ENCODE measurements at regions of chr6 and their contacts with region 1.

Region 1: GRCh38 chr6:31332637-31333602 is 24.1 kb downstream of the HLA-B start:
- DNase-seq: peak; percentile 39
- H3K4me3 Mint-ChIP-seq: no peak overlapping the region
- H3K27ac Mint-ChIP-seq: peak overlapping the region; percentile 60
- H3K4me1 Mint-ChIP-seq: peaks cover 16% of the 10 kb centered on the region
- H3K27me3 Mint-ChIP-seq: no peaks in the 10 kb centered on the region

Region 2: DNA sequence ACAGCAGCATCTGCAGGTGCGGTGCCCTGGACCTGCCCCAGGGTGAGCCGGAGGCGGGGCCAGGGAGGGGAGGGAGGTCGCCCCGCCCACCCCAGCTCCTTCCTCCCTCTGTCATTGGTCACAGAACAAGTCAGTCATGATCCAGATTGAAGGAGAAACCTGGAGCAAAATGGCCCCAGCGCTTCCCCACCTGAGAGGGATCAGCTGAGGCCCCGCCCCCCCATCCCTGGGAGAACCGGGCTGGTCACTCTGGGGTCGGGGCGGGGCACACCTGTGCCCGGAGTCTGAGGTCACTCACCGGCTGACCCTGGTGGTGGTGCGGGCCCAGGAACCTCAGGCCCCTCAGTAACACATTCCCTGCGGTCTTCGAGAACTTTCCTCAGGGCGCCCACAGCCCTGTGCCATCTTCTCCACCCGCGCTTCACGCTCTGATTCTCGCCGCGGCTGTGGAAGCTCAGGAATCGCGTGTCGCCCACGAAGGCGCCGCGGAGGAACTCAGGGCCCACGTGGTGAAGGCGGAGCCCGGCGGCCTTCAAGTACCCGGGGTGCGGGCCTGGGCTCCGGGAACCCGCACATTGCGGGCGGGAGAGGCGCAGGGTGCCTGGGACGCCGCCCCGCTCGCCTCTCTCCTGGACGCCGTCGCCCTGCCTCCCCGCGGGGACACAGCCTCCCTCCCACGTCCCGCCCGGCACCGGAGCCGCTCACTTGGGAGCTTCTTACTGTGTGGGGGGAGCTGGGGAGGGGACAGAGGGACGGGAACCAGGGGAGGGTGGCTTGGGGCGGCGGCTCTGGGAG is 24.7 kb before region 1 on chr6:
- CTCF ChIA-PET with region 1: no interaction called
- POLR2A ChIA-PET with region 1: no interaction called
- intact Hi-C with region 1: loop called (anchors 2 kb)
- DNase-seq: peak; percentile 80
- H3K4me3 Mint-ChIP-seq: peak overlapping the region; percentile 72
- H3K27ac Mint-ChIP-seq: no peak overlapping the region
- H3K4me1 Mint-ChIP-seq: no peaks in the 10 kb centered on the region
- H3K27me3 Mint-ChIP-seq: peaks cover 1% of the 10 kb centered on the region

Region 3: GRCh38 chr6:31351401-31352309 is 18.7 kb after region 1 on chr6:
- CTCF ChIA-PET with region 1: no interaction called
- POLR2A ChIA-PET with region 1: no interaction called
- intact Hi-C with region 1: loop called (anchors 2 kb)
- DNase-seq: peak; percentile 22
- H3K4me3 Mint-ChIP-seq: peak overlapping the region; percentile 5
- H3K27ac Mint-ChIP-seq: peak overlapping the region; percentile 19
- H3K4me1 Mint-ChIP-seq: peaks cover 54% of the 10 kb centered on the region
- H3K27me3 Mint-ChIP-seq: no peaks in the 10 kb centered on the region

Region 4: GRCh38 chr6:31927242-31927862 is 594.4 kb after region 1 on chr6 and contains the start of gene C2:
- CTCF ChIA-PET with region 1: no interaction called
- POLR2A ChIA-PET with region 1: no interaction called
- intact Hi-C with region 1: no loop called
- DNase-seq: no peak
- H3K4me3 Mint-ChIP-seq: no peak within 1 kb of the TSS
- H3K27ac Mint-ChIP-seq: no peak within 1 kb of the TSS
- H3K4me1 Mint-ChIP-seq: no peaks in the 10 kb centered on the region
- H3K27me3 Mint-ChIP-seq: no peaks in the 10 kb centered on the region
- total RNA-seq, gene C2: 0.97 to 1.0 TPM

Measured in activated CD4-positive, alpha-beta memory T cell treated with anti-CD3 and anti-CD28 coated beads for 36 hours (primary cell).